Activated naive CD4-positive, alpha-beta T cell treated with anti-CD3 and anti-CD28 coated beads for 36 hours (primary cell): ENCODE measurements at regions of chr1 and their contacts with region 1.

Region 1: DNA sequence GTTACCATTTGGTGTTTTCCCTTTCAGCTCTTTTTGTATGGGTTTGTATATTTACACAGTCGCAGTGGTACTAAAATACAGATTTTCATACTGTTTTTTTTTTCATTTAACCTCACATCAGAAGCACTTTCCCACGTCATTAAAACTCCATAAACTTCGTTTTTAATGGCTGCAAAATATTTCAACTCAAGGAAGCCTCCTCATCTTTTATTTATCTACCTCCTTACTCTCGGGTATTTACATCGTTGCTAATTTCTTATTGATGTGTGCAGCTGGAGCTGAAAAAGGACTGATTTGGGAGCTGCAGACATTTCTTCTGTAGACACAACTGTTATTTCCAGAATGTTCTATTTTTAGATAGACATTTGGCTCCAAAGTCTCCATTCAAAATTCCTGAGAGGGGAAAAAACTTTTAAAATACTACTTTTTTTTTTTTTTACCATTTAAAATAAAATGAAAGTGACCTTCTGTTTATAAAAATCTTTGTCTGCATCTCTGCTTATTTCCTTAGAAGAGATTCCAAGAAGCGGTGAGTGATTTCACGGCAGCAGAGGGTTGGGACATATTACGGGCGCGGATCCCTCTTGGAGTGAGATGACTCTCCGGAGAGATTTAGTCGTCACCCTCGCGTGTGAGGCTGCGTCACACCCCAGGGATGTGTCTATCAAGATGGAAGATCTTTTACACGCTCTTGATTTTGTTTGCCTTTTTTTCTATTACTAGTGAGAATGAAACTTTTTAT is 10.1 kb downstream of the RUNX3 start:
- DNase-seq: peak; percentile 61
- H3K4me3 Mint-ChIP-seq: no peak overlapping the region
- H3K27ac Mint-ChIP-seq: peak overlapping the region; percentile 81
- H3K4me1 Mint-ChIP-seq: peaks cover 52% of the 10 kb centered on the region
- H3K27me3 Mint-ChIP-seq: no peaks in the 10 kb centered on the region

Region 2: GRCh38 chr1:24987875-24988557 is 68.1 kb after region 1 on chr1:
- CTCF ChIA-PET with region 1: no interaction called
- intact Hi-C with region 1: loop called (anchors 2 kb)
- DNase-seq: peak; percentile 73
- H3K4me3 Mint-ChIP-seq: no peak overlapping the region
- H3K27ac Mint-ChIP-seq: peak overlapping the region; percentile 84
- H3K4me1 Mint-ChIP-seq: peaks cover 95% of the 10 kb centered on the region
- H3K27me3 Mint-ChIP-seq: no peaks in the 10 kb centered on the region